ENCODE measurements at regions of chr1 and their contacts with region 1.

Region 1: GRCh38 chr1:43067977-43068751 is 103.9 kb downstream of the EBNA1BP2 start:
- DNase-seq: no peak
- H3K4me3 ChIP-seq: peak overlapping the region; percentile 24 to 53
- H3K27ac ChIP-seq: no peak overlapping the region
- H3K4me1 ChIP-seq: peaks cover 0 to 13% (median 9%) of the 10 kb centered on the region in 4 donors
- H3K27me3 ChIP-seq: peaks cover 0 to 21% of the 10 kb centered on the region in 2 donors
- CTCF ChIP-seq: no peak

Region 2: DNA sequence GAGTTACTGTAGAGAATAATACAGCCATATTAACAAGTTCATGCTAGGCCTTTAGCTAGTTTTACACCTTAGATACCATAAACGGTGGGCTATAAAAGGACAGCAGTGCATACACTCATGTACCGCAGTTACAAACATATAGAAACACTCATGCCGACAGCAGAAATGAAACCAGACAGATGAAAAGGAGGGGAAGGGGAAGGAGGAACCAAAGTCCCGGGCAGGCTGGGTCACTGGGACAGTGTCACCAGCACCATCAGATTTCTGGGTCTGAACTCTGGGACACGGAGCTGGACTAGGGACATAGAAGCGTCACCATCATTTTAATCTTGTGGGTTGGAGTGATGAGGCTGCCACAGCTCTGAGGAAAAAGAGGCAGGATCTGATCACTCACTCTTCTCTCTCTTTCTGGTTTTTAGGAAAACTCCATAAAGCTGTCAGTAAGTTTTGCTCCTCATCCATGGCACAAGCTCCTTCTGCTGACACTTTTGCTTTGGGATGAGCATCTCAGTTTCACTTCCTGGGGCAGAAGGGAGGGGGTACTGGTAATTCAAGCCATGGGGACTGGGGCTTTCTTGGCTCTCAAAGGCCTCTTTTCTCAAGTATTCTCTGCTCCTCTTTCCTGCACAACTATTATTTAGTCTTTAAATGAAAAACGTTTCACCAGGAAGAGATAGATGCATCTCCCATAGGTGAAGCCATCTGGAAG is 229.5 kb before region 1 on chr1:
- intact Hi-C with region 1: no loop called
- DNase-seq: no peak
- H3K4me3 ChIP-seq: no peak overlapping the region
- H3K27ac ChIP-seq: no peak overlapping the region
- H3K4me1 ChIP-seq: no peaks in the 10 kb centered on the region
- H3K27me3 ChIP-seq: no peaks in the 10 kb centered on the region
- CTCF ChIP-seq: no peak

Region 3: GRCh38 chr1:42913426-42914091 is 154.6 kb before region 1 on chr1:
- intact Hi-C with region 1: loop called (anchors 2 kb)
- DNase-seq: peak in 1 of 2 donors; percentile 57
- H3K4me3 ChIP-seq: no peak overlapping the region
- H3K27ac ChIP-seq: no peak overlapping the region
- H3K4me1 ChIP-seq: no peaks in the 10 kb centered on the region
- H3K27me3 ChIP-seq: no peaks in the 10 kb centered on the region
- CTCF ChIP-seq: peak; percentile 86 to 94

Region 4: GRCh38 chr1:42971841-42972291 is 96.3 kb before region 1 on chr1:
- intact Hi-C with region 1: loop called (anchors 10 kb)
- DNase-seq: no peak
- H3K4me3 ChIP-seq: no peak overlapping the region
- H3K27ac ChIP-seq: no peak overlapping the region
- H3K4me1 ChIP-seq: peaks cover 0 to 5% (median 2%) of the 10 kb centered on the region in 4 donors
- H3K27me3 ChIP-seq: no peaks in the 10 kb centered on the region
- CTCF ChIP-seq: no peak

Region 5: GRCh38 chr1:42993631-42994121 is 74.5 kb before region 1 on chr1:
- intact Hi-C with region 1: no loop called
- DNase-seq: peak in 1 of 2 donors; percentile 28
- H3K4me3 ChIP-seq: no peak overlapping the region
- H3K27ac ChIP-seq: no peak overlapping the region
- H3K4me1 ChIP-seq: peaks cover 0 to 7% (median 0%) of the 10 kb centered on the region in 4 donors
- H3K27me3 ChIP-seq: no peaks in the 10 kb centered on the region
- CTCF ChIP-seq: no peak

Region 6: GRCh38 chr1:43509723-43510375 is 441.7 kb after region 1 on chr1:
- intact Hi-C with region 1: no loop called
- DNase-seq: no peak
- H3K4me3 ChIP-seq: no peak overlapping the region
- H3K27ac ChIP-seq: no peak overlapping the region
- H3K4me1 ChIP-seq: no peaks in the 10 kb centered on the region
- H3K27me3 ChIP-seq: peaks cover 0 to 13% of the 10 kb centered on the region in 2 donors
- CTCF ChIP-seq: no peak